Heart left ventricle (tissue), 16 donors: ENCODE measurements at regions of chr9 and their contacts with region 1.

Region 1: DNA sequence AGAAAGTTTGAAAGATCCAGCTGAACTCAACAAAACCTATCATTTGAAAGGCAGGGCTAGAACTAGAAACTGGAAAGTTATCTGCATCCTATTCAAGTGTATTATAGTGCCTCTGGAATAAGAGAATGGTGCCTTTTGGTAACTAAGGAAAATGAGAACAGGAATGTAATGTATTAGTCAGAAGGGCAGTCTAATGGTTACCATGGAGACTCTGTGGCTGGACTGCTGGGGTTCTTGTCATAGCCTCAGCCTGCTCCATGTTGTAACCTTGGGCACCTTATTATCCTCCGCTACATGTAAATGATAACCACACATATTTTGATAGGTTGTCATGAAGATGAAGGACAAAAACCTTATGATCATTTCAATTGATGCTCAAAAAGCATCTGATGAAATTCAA is 24.6 kb upstream of the IFNB1 start:
- DNase-seq: no peak
- ATAC-seq: no peak
- H3K4me3 ChIP-seq: no peak overlapping the region
- H3K27ac ChIP-seq: no peak overlapping the region
- H3K4me1 ChIP-seq: peaks cover 0 to 19% (median under 1%) of the 10 kb centered on the region in 12 donors
- H3K27me3 ChIP-seq: no peaks in the 10 kb centered on the region
- CTCF ChIP-seq: no peak
- POLR2A ChIP-seq: no peak

Region 2: DNA sequence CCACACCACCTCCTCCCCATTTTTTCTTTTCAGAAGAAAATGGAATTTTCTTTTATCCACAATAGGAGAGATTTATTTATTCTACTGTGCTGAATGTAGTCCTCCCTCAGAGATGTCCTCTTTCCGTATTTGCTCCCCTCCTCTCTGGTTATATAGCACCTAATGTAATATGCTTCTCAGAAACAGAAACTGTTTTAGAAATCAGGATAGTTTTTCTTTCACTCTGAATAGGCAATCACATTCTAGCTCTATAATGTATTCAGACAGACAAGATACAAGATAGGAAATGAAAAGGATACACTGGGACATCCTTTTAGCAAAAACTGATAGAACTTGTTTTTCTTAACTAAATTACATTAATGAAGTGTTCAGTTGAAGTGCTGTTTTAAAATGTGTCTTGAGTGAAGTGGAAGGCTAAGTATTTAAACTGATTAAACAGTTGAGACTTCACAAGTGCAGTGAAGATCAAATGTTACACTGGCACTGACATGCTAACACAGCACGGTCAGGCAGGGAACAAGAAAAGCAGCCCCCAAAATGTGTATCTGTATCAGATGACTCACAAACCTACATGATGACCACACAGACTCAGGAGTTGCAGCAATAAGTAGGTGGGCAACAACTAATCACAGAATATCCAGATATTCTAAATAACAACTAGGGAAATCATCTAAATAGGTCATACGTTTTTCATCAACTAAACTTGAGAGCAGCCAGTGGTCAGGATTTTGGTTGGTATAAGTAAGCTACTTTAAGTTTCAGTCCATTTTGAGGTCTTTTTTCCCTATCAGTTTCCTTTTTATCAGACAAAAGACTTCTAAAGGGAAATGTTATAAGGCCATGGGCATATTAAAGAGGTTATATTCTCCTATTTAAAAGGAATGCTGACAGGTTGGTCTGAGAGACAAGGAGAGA is 740.4 kb before region 1 on chr9:
- intact Hi-C with region 1: loop called in 1 of 10 experiments (anchors 10 kb)
- DNase-seq: no peak
- ATAC-seq: no peak
- H3K4me3 ChIP-seq: no peak overlapping the region
- H3K27ac ChIP-seq: no peak overlapping the region
- H3K4me1 ChIP-seq: peaks cover 0 to 7% (median 3%) of the 10 kb centered on the region in 12 donors
- H3K27me3 ChIP-seq: no peaks in the 10 kb centered on the region
- CTCF ChIP-seq: no peak
- POLR2A ChIP-seq: no peak

Region 3: DNA sequence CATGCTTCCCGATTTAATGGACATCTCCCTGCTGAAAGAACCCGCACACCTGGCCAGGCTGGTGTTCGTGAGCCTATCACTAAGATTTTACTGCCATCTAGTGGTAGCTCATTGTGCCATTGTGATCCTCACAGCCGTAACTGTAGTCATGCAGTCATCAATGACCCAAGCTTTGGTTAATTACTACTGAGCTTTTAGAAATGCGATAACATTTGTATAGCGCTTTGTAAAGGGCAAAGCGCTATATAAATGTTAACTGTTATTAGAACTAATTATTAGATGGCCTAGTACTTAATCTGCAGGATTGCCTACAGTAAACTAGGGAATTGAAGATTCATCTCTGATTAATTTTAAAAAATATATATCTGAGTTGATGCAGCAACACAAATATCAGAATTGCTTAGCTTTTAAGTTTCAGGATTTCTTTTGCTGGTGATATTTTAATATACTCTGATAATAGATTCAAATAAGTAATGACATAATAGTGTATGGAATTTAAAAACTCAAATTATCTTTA is 161.1 kb before region 1 on chr9:
- intact Hi-C with region 1: loop called in 2 of 10 experiments (anchors 10 kb)
- DNase-seq: peak in 3 of 5 donors; percentile 30 to 37 (median 34)
- ATAC-seq: peak; percentile 82 to 93 (median 88)
- H3K4me3 ChIP-seq: no peak overlapping the region
- H3K27ac ChIP-seq: no peak overlapping the region
- H3K4me1 ChIP-seq: peaks cover 0 to 6% (median 0%) of the 10 kb centered on the region in 12 donors
- H3K27me3 ChIP-seq: no peaks in the 10 kb centered on the region
- CTCF ChIP-seq: peak; percentile 76 to 94 (median 86)
- POLR2A ChIP-seq: no peak

Region 4: GRCh38 chr9:20972684-20973083 is 129.6 kb before region 1 on chr9:
- intact Hi-C with region 1: loop called in 1 of 10 experiments (anchors 10 kb)
- DNase-seq: no peak
- ATAC-seq: no peak
- H3K4me3 ChIP-seq: no peak overlapping the region
- H3K27ac ChIP-seq: no peak overlapping the region
- H3K4me1 ChIP-seq: no peaks in the 10 kb centered on the region
- H3K27me3 ChIP-seq: no peaks in the 10 kb centered on the region
- CTCF ChIP-seq: no peak
- POLR2A ChIP-seq: no peak

Region 5: GRCh38 chr9:21031091-21031807 is 71.1 kb before region 1 on chr9 and contains the start of gene HACD4:
- intact Hi-C with region 1: loop called in 3 of 10 experiments (anchors 5 to 10 kb)
- DNase-seq: peak; percentile 48 to 85 (median 63)
- ATAC-seq: peak; percentile 71 to 94 (median 92)
- H3K4me3 ChIP-seq: peak within 1 kb of the TSS; percentile 30 to 73 (median 58)
- H3K27ac ChIP-seq: peak within 1 kb of the TSS in 11 of 12 donors; percentile 18 to 88 (median 54)
- H3K4me1 ChIP-seq: peaks cover 0 to 44% (median 4%) of the 10 kb centered on the region in 12 donors
- H3K27me3 ChIP-seq: peaks cover 0 to 11% (median 0%) of the 10 kb centered on the region in 9 donors
- CTCF ChIP-seq: no peak
- POLR2A ChIP-seq: no peak
- total RNA-seq, gene HACD4: 0.33 to 2.8 (median 0.69) TPM